ENCODE measurements at regions of chr18 and their contacts with region 1.

Region 1: DNA sequence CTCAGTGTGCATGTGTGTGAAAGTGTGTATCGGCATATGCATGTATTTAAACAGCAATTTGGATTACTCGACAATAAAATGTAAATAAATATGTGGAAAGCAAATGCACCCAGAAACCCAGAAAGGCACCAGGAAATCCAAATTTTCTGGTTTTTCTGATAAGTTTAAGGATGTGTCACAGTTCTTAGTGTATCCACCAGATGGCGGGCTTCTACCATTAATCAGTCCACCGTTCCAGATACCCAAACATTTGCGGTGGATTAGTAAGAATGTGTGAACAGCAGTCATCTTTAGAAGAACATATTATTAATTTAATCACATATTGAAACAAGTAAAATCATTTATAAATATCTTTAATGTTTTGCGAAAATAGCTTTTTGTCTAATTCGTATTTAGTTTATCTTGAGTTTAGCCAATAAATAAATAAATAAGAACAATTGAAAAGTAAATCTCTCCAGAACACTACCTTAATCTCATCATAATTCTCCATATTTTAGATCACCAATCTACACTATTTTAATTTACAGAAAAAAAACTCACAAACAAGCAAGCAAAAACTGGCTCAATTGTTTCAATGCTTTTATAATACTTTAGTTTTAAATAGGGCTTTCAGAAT is 298.9 kb downstream of the DSEL start:
- DNase-seq: peak in 1 of 2 donors; percentile 79
- ATAC-seq: peak; percentile 65 to 80 (median 74)
- H3K4me3 ChIP-seq: no peak overlapping the region
- H3K4me3 Mint-ChIP-seq: no peak overlapping the region
- H3K27ac ChIP-seq: no peak overlapping the region
- H3K27ac Mint-ChIP-seq: no peak overlapping the region
- H3K4me1 ChIP-seq: no peaks in the 10 kb centered on the region
- H3K4me1 Mint-ChIP-seq: no peaks in the 10 kb centered on the region
- H3K27me3 ChIP-seq: no peaks in the 10 kb centered on the region
- H3K27me3 Mint-ChIP-seq: no peaks in the 10 kb centered on the region
- CTCF ChIP-seq: peak; percentile 78

Region 2: GRCh38 chr18:66949419-66949818 is 268.2 kb before region 1 on chr18:
- intact Hi-C with region 1: no loop called
- DNase-seq: no peak
- ATAC-seq: no peak
- H3K4me3 ChIP-seq: no peak overlapping the region
- H3K4me3 Mint-ChIP-seq: no peak overlapping the region
- H3K27ac ChIP-seq: no peak overlapping the region
- H3K27ac Mint-ChIP-seq: no peak overlapping the region
- H3K4me1 ChIP-seq: no peaks in the 10 kb centered on the region
- H3K4me1 Mint-ChIP-seq: no peaks in the 10 kb centered on the region
- H3K27me3 ChIP-seq: no peaks in the 10 kb centered on the region
- H3K27me3 Mint-ChIP-seq: no peaks in the 10 kb centered on the region
- CTCF ChIP-seq: no peak

Region 3: DNA sequence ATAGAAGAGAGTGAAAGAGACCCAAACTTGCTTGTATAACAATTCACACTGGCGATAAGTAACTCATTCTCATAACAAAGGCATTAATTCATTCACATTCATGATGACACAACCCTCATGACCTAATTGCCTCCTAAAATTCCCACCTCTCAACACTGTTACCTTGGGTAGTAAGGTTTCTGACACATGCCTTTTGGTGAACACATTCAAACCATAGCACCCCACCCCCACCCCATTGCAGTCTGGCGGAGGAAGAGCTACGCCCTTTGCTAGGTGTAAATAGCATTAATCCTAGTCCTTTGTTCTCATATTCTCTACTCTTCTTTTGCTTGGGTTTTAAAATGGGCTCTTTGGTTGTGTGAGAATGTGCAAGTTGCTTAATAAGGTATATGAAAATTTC is 62.7 kb before region 1 on chr18:
- intact Hi-C with region 1: no loop called
- DNase-seq: no peak
- ATAC-seq: no peak
- H3K4me3 ChIP-seq: no peak overlapping the region
- H3K4me3 Mint-ChIP-seq: no peak overlapping the region
- H3K27ac ChIP-seq: no peak overlapping the region
- H3K27ac Mint-ChIP-seq: no peak overlapping the region
- H3K4me1 ChIP-seq: no peaks in the 10 kb centered on the region
- H3K4me1 Mint-ChIP-seq: no peaks in the 10 kb centered on the region
- H3K27me3 ChIP-seq: no peaks in the 10 kb centered on the region
- H3K27me3 Mint-ChIP-seq: no peaks in the 10 kb centered on the region
- CTCF ChIP-seq: no peak

Region 4: DNA sequence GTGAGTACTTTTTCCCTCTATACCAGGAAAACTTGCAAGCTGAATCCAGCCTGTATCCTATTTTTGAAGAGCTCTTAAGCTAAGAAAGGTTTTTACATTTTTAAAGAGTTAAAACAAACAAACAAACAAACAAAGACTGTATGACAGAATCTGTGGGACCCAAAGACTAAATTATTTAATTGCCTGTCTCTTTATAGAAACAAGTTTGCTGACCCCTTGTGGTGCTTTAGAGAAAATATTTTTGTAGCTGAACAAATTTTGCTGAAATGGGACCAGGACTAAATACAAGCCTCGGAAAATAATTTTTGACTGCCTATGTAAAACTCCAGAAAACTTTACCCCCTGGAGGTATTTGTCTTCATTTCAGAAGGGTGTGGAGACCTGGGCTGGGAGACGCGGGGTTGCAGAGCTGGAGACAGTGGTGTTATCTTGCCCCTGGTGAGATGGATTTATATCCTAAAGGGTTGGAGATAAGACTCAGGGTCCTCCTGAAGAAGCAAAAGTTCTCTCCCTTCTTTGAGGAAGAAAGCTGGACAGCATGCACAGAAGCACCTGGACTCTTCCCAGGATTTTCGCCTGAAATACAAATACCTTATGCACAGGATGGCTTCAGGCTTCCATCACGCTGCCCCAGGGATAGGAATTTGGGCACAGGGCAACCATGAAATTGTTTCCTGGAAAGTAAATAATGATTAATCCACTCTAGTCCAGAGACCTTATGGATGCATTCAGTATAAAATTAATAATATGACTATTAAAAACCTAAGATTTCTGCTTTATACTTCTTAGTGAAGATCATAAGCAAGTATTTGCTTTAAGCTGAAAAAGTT is 1442.9 kb after region 1 on chr18:
- intact Hi-C with region 1: loop called (anchors 1 kb)
- DNase-seq: peak in 1 of 2 donors; percentile 60
- ATAC-seq: no peak
- H3K4me3 ChIP-seq: no peak overlapping the region
- H3K4me3 Mint-ChIP-seq: no peak overlapping the region
- H3K27ac ChIP-seq: no peak overlapping the region
- H3K27ac Mint-ChIP-seq: no peak overlapping the region
- H3K4me1 ChIP-seq: no peaks in the 10 kb centered on the region
- H3K4me1 Mint-ChIP-seq: no peaks in the 10 kb centered on the region
- H3K27me3 ChIP-seq: no peaks in the 10 kb centered on the region
- H3K27me3 Mint-ChIP-seq: peaks cover 3 to 22% of the 10 kb centered on the region in 2 donors
- CTCF ChIP-seq: peak; percentile 21

Region 5: DNA sequence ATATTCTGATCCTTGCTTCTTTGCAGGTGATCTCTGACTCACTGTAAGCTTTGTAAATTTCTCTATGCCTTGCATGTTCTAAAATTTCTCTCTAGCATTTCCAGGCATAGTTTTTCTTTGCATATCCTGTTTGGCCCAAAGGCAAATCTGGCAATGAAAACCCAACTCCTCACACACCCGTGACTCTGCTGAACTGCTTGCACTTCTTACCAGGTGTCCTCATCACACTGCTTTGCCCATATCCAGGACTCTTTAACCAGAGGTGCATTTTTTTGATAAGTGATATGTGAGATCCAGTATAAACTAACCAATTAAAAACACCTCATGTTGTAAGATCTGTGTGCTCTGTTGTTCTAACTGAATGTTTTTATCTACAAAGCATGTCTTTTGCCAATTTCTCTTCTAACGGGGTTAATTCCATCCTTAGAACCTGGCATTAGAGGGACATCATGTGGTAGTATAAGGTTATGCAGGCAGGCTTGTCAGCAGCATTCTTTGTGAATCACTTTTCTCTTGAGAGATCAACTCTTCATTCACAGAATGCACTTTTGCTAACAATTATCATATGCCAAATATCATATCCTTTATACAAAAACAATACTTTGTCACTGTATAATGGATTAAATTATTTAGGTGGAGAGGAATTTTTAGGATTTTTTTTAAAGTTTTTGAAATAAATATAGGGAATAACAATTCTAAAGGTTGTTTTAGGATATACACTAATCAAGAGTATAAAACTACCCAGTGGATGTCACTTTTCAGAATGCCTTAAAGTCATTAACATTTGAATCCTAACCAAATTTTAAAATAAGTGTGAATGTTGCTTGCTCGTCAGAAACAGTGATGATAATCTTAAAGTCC is 1518.1 kb after region 1 on chr18:
- intact Hi-C with region 1: loop called (anchors 2 kb)
- DNase-seq: peak in 1 of 2 donors; percentile 62
- ATAC-seq: peak; percentile 50 to 61 (median 54)
- H3K4me3 ChIP-seq: no peak overlapping the region
- H3K4me3 Mint-ChIP-seq: no peak overlapping the region
- H3K27ac ChIP-seq: no peak overlapping the region
- H3K27ac Mint-ChIP-seq: no peak overlapping the region
- H3K4me1 ChIP-seq: no peaks in the 10 kb centered on the region
- H3K4me1 Mint-ChIP-seq: no peaks in the 10 kb centered on the region
- H3K27me3 ChIP-seq: no peaks in the 10 kb centered on the region
- H3K27me3 Mint-ChIP-seq: no peaks in the 10 kb centered on the region
- CTCF ChIP-seq: peak; percentile 52

Measured in natural killer cell (primary cell).